A549 (cell line): ENCODE measurements at regions of chr22 and their contacts with region 1.

Region 1: DNA sequence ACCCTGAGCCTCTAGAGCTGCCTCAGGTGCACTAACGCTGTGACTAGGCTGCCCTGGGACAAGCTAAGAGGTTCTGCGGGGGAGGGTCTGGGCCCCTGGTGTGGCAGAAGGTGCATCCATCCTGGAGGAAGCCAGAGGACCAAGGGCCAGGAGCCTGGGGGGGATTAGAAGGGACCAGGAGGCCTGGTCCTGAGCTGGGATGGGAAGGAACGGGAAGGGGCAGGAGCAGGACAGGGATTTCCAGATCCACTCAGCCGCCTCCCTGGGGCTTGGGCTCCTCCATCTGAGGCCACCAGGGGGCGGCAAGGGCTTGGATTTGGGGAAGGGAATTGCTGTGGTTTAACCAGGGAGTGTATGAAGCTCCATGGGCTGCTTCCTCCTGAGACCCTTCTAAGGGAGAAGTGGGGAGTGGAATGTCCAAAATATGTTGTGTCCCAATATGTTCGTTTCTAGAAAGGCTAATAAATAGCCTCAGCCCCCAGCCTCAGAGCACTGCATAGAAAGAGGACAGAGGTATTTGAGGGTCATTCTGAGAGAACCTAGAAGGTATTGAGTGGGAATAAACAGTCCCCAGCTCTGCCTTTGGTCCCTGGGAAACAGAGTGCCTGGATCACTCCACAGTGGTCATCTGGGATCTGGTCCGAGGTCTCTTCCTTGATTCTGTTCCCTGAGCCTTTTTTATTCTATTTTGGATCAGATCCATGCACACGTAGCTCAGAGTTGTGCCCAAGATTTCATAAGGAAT is 17.4 kb upstream of the PRAME start:
- DNase-seq: peak; percentile 48 to 55
- ATAC-seq: peak; percentile 95 to 99
- H3K4me3 ChIP-seq: no peak overlapping the region
- H3K27ac ChIP-seq: no peak overlapping the region
- H3K4me1 ChIP-seq: no peaks in the 10 kb centered on the region
- CTCF ChIP-seq: peak; percentile 55
- EP300 ChIP-seq: no peak
- POLR2A ChIP-seq: no peak
- RAD21 ChIP-seq: peak in 1 of 2 experiments; percentile 56; a peak in 3 of 5 replicates

Region 2: GRCh38 chr22:22463855-22464540 is 112.4 kb before region 1 on chr22:
- CTCF ChIA-PET with region 1: interaction called, 18 read pairs
- POLR2A ChIA-PET with region 1: no interaction called
- DNase-seq: peak; percentile 38 to 52
- ATAC-seq: peak; percentile 73 to 93; a peak in 5 of 6 replicates
- H3K4me3 ChIP-seq: peak overlapping the region; percentile 18; the same call in 1 of the 3 replicates
- H3K27ac ChIP-seq: no peak overlapping the region
- H3K4me1 ChIP-seq: no peaks in the 10 kb centered on the region
- CTCF ChIP-seq: peak; percentile 73
- EP300 ChIP-seq: no peak
- POLR2A ChIP-seq: no peak
- RAD21 ChIP-seq: peak; percentile 85 to 86

Region 3: DNA sequence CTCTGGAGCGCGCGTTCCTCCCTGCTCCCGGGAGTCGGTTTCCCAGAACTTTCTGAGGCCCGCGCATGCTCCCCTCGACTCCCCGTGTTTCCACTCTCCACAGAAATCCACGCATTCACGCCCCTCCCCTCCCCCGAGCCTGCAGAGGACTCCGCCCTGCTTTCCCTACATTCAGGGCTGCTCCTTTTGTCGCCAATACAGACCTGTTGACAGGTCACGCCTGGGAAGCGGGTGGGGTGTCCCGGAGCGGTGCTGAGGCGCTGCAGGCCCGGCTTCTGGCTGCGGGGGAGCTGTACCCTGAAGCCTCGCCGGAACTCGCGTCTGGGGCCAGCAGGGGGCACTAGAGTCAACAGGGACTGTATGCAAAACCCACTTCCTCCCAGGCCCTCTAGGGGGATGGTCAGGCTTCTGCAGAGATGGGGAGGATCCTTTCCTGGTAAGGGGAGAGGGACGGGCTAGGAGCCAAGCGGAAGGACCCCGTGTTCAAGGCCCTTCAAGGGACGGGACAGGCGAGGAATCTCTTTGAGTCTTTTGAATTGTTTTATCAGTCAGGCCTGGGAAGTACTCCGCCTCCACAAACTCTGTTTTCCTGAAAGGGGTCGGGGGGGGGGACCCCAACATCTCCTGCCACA is 17.3 kb before region 1 on chr22 and contains the start of gene PRAME:
- CTCF ChIA-PET with region 1: interaction called, 32 read pairs
- POLR2A ChIA-PET with region 1: no interaction called
- DNase-seq: peak; percentile 71 to 93
- ATAC-seq: peak; percentile 95 to 98
- H3K4me3 ChIP-seq: peak within 1 kb of the TSS; percentile 90
- H3K27ac ChIP-seq: peak within 1 kb of the TSS; percentile 96 to 99
- H3K4me1 ChIP-seq: peaks cover 36% of the 10 kb centered on the region; the same call in 2 of the 3 replicates
- CTCF ChIP-seq: peak; percentile 76
- EP300 ChIP-seq: no peak
- POLR2A ChIP-seq: peak; percentile 15; the same call in 1 of the 2 replicates
- RAD21 ChIP-seq: peak; percentile 44 to 59
- polyA plus RNA-seq, gene PRAME: 173 and 228 TPM in 2 replicates

Region 4: GRCh38 chr22:22565981-22566380 is 10.4 kb before region 1 on chr22:
- CTCF ChIA-PET with region 1: interaction called, 32 read pairs
- POLR2A ChIA-PET with region 1: no interaction called
- DNase-seq: peak in 1 of 2 experiments; percentile 4
- ATAC-seq: no peak
- H3K4me3 ChIP-seq: no peak overlapping the region
- H3K27ac ChIP-seq: no peak overlapping the region
- H3K4me1 ChIP-seq: no peaks in the 10 kb centered on the region
- CTCF ChIP-seq: no peak
- EP300 ChIP-seq: no peak
- POLR2A ChIP-seq: no peak
- RAD21 ChIP-seq: no peak